Ovary (tissue), 10 donors: ENCODE measurements at regions of chr9 and their contacts with region 1.

Region 1: GRCh38 chr9:16515879-16516301 is 354.6 kb downstream of the BNC2 start:
- DNase-seq: peak in 3 of 5 donors; percentile 48 to 55 (median 49)
- H3K4me3 ChIP-seq: no peak overlapping the region
- H3K27ac ChIP-seq: peak overlapping the region in 1 of 2 donors; percentile 72
- H3K4me1 ChIP-seq: peaks cover 14% of the 10 kb centered on the region
- H3K27me3 ChIP-seq: no peaks in the 10 kb centered on the region
- CTCF ChIP-seq: no peak
- EP300 ChIP-seq: no peak
- POLR2A ChIP-seq: no peak

Region 2: DNA sequence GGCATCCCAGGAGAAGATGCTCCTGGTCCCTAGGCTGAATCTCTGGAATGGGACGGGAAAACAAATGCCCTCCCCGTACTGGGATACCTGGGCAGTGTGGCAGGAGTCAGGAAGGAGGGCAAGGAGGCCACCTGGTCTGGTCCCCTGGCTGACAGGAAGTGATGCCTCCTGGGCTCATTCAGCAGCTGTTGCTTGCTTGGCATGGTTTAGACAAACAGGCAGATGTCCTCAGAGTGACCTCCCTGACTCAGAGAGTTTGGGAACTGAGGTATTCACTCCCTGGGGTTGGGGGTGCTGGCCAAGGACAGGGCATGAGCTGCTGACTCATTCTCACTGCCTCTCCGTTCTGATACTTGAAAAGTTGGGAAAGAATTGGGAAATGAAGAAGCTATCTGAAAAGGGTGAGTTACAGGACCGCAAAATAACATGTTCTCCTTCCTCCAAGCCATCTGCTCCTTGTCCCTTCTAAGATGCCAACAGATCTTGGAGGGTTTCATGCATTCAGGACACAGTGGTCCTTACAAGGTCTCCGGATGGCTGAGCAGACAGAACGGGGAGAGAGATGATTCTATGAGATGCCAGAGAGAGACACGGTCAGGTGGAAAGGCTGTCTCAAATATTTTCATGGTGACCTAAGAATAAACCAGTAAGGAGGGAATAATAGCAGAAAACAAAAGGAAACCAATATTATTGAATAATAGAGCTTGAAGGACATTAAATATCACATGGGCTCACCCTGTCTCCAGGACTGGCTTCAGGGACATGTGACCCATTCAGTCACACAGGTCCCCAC is 179.9 kb before region 1 on chr9:
- intact Hi-C with region 1: loop called in 1 of 4 experiments (anchors 10 kb)
- DNase-seq: peak; percentile 82 to 95 (median 87)
- H3K4me3 ChIP-seq: no peak overlapping the region
- H3K27ac ChIP-seq: peak overlapping the region; percentile 17 to 81
- H3K4me1 ChIP-seq: peaks cover 17% of the 10 kb centered on the region
- H3K27me3 ChIP-seq: no peaks in the 10 kb centered on the region
- CTCF ChIP-seq: peak in 1 of 3 donors; percentile 10
- EP300 ChIP-seq: peak; percentile 97
- POLR2A ChIP-seq: no peak

Region 3: DNA sequence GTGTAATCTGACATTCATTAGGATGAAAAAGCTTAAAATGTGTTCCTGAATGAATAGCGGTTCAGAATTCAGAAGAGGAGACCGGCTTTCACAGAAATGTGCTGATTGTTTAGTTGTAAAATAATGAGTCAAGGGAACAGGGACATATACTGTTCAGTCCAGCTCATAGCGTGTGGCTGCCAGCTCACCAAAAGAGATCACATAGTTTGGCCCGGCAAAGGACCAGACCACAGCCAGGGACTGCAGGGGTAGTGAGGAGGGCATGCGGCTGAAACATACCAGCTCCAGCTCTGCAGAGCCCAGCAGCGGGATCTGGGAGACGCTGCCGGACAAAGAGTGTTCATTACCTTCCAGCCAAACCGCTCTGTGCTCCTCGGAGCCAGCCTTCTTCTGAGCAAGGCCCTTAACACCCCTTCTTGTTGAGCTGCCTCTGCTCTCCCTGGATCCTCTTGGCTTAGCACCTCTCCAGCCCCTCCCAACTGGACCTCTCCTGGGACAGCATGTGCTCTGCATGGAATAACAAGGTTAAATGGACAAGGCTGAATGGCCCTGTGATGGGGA is 502.1 kb after region 1 on chr9:
- intact Hi-C with region 1: no loop called
- DNase-seq: peak; percentile 19 to 80 (median 63)
- H3K4me3 ChIP-seq: no peak overlapping the region
- H3K27ac ChIP-seq: no peak overlapping the region
- H3K4me1 ChIP-seq: peaks cover 5% of the 10 kb centered on the region
- H3K27me3 ChIP-seq: no peaks in the 10 kb centered on the region
- CTCF ChIP-seq: no peak
- EP300 ChIP-seq: no peak
- POLR2A ChIP-seq: no peak